Activated CD4-positive, alpha-beta T cell treated with anti-CD3 and anti-CD28 coated beads for 36 hours (primary cell): ENCODE measurements at regions of chr1 and their contacts with region 1.

Region 1: GRCh38 chr1:43171876-43172526 is at the starts of genes CFAP57 and EBNA1BP2:
- DNase-seq: peak; percentile 94
- ATAC-seq: peak; percentile 93
- H3K4me3 Mint-ChIP-seq: peak within 1 kb of the TSS; percentile 93
- H3K27ac Mint-ChIP-seq: peak within 1 kb of the TSS; percentile 95
- H3K4me1 Mint-ChIP-seq: peaks cover 29% of the 10 kb centered on the region
- H3K27me3 Mint-ChIP-seq: peaks cover 9% of the 10 kb centered on the region
- total RNA-seq, gene CFAP57: 0.11 TPM in 1 of 2 experiments, not detected in the other
- total RNA-seq, gene EBNA1BP2: 100 to 114 TPM

Region 2: DNA sequence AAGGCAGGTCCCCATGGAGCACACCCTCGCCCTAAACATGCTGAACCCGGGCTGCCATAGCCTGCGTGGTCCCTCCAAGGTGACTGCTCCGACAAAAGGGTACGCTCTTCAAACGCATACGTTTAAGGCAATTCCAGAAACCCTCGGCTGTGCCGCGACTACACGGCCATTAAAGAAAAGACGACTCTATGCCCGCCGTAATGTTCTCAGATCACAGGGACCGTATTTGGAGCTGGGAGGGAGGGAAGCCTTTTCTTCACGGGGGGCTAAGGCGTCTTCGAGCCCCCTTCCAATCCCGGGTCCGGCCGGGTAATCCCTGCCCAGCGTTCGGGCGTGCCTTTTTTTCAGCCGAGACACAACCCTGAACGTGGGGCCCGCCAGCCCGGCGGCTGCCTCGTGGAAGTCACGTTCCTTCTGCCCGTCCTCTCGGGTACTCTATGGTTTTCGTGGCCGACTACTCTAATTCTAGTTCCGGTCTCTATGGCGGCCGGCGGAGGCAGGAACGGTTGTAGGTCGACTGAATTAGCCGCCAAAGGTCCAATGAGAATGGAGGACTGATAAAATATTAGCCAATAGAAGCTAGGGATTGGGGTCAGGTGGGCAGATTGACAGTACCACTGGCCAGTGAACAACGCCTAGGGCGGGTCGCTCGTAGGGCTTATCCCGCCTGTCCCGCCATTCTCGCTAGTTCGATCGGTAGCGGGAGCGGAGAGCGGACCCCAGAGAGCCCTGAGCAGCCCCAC is 490.1 kb before region 1 on chr1 and contains the start of gene YBX1:
- CTCF ChIA-PET with region 1: no interaction called
- POLR2A ChIA-PET with region 1: no interaction called
- intact Hi-C with region 1: loop called in 1 of 2 experiments (anchors 1 kb)
- DNase-seq: peak; percentile 96
- ATAC-seq: peak; percentile 97
- H3K4me3 Mint-ChIP-seq: peak within 1 kb of the TSS; percentile 93
- H3K27ac Mint-ChIP-seq: peak within 1 kb of the TSS; percentile 97
- H3K4me1 Mint-ChIP-seq: peaks cover 41% of the 10 kb centered on the region
- H3K27me3 Mint-ChIP-seq: no peaks in the 10 kb centered on the region
- total RNA-seq, gene YBX1: 1,224 to 1,435 TPM

Region 3: GRCh38 chr1:42924082-42924850 is 247.7 kb before region 1 on chr1:
- CTCF ChIA-PET with region 1: no interaction called
- POLR2A ChIA-PET with region 1: no interaction called
- intact Hi-C with region 1: loop called in 1 of 2 experiments (anchors 1 kb)
- DNase-seq: peak; percentile 95
- ATAC-seq: peak; percentile 87
- H3K4me3 Mint-ChIP-seq: peak overlapping the region; percentile 87
- H3K27ac Mint-ChIP-seq: peak overlapping the region; percentile 95
- H3K4me1 Mint-ChIP-seq: peaks cover 32% of the 10 kb centered on the region
- H3K27me3 Mint-ChIP-seq: no peaks in the 10 kb centered on the region

Region 4: DNA sequence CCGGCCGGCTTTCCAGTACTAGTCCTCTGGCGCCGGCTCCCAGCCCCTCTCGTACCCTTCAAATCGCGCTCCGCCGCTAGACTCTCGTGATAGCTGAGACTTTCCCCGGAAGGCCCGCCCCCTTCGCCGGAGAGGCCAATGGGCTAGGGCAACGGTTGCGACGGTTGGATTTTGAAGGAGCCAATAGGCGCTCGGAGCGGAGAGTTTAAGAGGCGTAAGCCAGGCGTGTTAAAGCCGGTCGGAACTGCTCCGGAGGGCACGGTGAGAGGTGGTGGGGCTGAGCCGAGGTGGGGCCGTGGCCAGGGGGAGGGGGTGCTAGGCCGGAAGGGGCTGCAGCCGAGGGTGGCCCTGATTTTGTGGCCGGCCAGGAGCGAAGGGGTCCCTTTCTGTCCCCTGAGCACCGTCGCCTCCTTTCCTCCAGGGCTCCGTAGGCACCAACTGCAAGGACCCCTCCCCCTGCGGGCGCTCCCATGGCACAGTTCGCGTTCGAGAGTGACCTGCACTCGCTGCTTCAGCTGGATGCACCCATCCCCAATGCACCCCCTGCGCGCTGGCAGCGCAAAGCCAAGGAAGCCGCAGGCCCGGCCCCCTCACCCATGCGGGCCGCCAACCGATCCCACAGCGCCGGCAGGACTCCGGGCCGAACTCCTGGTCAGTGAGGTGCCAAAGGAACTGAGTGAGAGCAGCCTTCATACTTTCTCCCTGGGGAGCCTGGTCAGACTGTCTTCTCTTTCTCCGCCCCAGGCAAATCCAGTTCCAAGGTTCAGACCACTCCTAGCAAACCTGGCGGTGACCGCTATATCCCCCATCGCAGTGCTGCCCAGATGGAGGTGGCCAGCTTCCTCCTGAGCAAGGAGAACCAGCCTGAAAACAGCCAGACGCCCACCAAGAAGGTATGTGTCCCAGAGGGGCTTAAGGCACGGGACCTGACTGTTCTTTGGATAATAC is 187.0 kb after region 1 on chr1 and contains the start of gene CDC20:
- CTCF ChIA-PET with region 1: no interaction called
- POLR2A ChIA-PET with region 1: no interaction called
- intact Hi-C with region 1: loop called in 1 of 2 experiments (anchors 2 kb)
- DNase-seq: peak; percentile 99
- ATAC-seq: peak; percentile 99
- H3K4me3 Mint-ChIP-seq: peak within 1 kb of the TSS; percentile 97
- H3K27ac Mint-ChIP-seq: peak within 1 kb of the TSS; percentile 93
- H3K4me1 Mint-ChIP-seq: peaks cover 32% of the 10 kb centered on the region
- H3K27me3 Mint-ChIP-seq: no peaks in the 10 kb centered on the region
- total RNA-seq, gene CDC20: 158 to 163 TPM

Region 5: DNA sequence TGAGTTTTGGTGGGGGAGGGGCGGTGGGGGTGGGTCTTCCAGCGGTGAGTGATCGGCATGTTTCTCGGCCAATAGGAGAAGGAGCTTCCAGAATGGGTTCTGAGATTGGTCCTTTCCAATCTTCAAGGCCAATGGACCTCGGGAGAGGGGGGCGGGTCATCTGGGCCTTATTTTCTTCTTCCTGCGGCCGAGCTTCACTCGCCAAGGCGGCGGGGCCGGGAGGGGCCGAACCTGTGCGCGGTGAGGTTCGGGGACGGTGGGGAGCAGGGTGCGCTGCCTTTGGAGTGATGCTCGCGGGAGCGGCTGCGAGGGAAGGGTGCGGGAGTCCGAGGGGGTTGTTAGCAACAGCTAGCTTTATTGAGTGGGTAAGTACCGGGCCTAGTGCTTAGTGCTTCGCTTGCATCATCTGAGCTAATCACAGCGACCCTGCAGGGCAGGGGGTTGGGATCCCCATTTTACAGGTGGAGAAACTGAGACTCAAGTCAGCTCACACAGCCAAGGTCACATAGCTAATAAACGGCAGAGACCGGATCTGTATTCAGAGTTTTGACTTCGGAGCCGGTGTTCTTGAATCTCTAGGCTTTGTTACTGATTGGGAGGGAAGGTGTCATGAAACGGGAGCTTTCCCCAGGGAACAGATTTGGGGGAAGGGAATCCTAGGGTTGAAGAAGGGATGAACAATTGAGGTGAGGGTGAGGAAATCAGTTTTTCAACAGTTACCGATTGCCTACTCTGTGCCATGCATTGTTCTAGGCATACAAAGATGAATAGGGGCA is 478.5 kb after region 1 on chr1:
- CTCF ChIA-PET with region 1: no interaction called
- POLR2A ChIA-PET with region 1: no interaction called
- intact Hi-C with region 1: loop called in 1 of 2 experiments (anchors 1 kb)
- DNase-seq: peak; percentile 95
- ATAC-seq: peak; percentile 81
- H3K4me3 Mint-ChIP-seq: peak overlapping the region; percentile 89
- H3K27ac Mint-ChIP-seq: peak overlapping the region; percentile 97
- H3K4me1 Mint-ChIP-seq: peaks cover 31% of the 10 kb centered on the region
- H3K27me3 Mint-ChIP-seq: no peaks in the 10 kb centered on the region